ENCODE measurements at regions of chr18 and their contacts with region 1.

Region 1: DNA sequence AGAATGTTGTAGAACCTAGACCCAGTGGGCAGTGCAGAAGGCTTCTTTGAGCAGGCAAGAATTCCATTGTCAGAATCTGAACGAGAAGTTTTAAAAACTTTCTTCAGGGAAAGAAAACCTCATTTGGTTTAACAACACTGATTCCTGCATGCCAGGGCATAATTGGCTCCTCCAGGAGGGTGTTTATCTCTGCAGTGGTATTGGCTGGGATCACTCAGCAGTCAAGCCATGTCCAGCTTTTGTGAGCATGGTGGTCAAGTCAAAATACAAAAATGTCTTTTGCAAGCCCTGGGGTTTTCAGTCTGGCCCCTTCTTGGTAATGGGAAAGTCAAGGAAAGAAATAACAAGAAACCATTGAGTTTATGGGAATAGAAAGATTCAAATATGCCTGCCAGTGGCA is 28.3 kb downstream of the FHOD3 start:
- DNase-seq: no peak
- H3K4me3 ChIP-seq: no peak overlapping the region
- H3K27ac ChIP-seq: no peak overlapping the region
- H3K4me1 ChIP-seq: peaks cover 1% of the 10 kb centered on the region
- H3K27me3 ChIP-seq: no peaks in the 10 kb centered on the region
- CTCF ChIP-seq: no peak
- EP300 ChIP-seq: no peak
- POLR2A ChIP-seq: no peak

Region 2: DNA sequence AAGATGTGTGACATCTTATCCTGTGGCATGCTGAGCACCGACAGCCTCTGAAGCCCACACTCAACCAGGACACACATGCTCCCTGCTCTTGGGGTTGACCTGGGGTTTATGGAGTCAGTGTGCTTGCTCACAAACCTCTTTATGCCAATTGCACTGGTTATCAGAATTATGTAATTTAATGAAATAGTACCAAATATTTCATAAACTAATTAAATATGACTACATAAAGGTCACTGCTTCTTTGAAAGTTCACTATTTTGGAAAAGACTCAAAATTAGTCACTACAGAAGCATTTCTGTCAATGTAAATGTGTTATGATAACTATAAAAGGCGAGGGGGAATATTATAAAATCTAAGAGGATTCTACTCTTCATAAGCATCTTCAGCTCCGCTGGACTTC is 48.4 kb after region 1 on chr18:
- intact Hi-C with region 1: loop called in 1 of 4 experiments (anchors 2 kb)
- DNase-seq: no peak
- H3K4me3 ChIP-seq: no peak overlapping the region
- H3K27ac ChIP-seq: no peak overlapping the region
- H3K4me1 ChIP-seq: no peaks in the 10 kb centered on the region
- H3K27me3 ChIP-seq: no peaks in the 10 kb centered on the region
- CTCF ChIP-seq: no peak
- EP300 ChIP-seq: no peak
- POLR2A ChIP-seq: no peak